Activated CD4-positive, alpha-beta memory T cell treated with anti-CD3 and anti-CD28 coated beads, Interleukin-2, amount 10 ng/mL, durations not matched to agents 7 days and 5 days (primary cell): ENCODE measurements at regions of chr12 and their contacts with region 1.

Region 1: GRCh38 chr12:132771126-132771838 is 9.7 kb upstream of the ANKLE2 start:
- DNase-seq: peak; percentile 51
- H3K4me3 Mint-ChIP-seq: no peak overlapping the region
- H3K27ac Mint-ChIP-seq: peak overlapping the region; percentile 0
- H3K4me1 Mint-ChIP-seq: peaks cover 30% of the 10 kb centered on the region
- H3K27me3 Mint-ChIP-seq: no peaks in the 10 kb centered on the region

Region 2: GRCh38 chr12:132904718-132905328 is 133.5 kb after region 1 on chr12:
- CTCF ChIA-PET with region 1: interaction called, 15 read pairs
- POLR2A ChIA-PET with region 1: no interaction called
- DNase-seq: peak; percentile 87
- H3K4me3 Mint-ChIP-seq: peak overlapping the region; percentile 44
- H3K27ac Mint-ChIP-seq: no peak overlapping the region
- H3K4me1 Mint-ChIP-seq: peaks cover 19% of the 10 kb centered on the region
- H3K27me3 Mint-ChIP-seq: peaks cover 7% of the 10 kb centered on the region